GM10248 (cell line): ENCODE measurements at regions of chr5 and their contacts with region 1.

Region 1: GRCh38 chr5:81165493-81166119 is 67.5 kb upstream of the CKMT2 start:
- DNase-seq: peak; percentile 75
- CTCF ChIP-seq: peak; percentile 89

Region 2: DNA sequence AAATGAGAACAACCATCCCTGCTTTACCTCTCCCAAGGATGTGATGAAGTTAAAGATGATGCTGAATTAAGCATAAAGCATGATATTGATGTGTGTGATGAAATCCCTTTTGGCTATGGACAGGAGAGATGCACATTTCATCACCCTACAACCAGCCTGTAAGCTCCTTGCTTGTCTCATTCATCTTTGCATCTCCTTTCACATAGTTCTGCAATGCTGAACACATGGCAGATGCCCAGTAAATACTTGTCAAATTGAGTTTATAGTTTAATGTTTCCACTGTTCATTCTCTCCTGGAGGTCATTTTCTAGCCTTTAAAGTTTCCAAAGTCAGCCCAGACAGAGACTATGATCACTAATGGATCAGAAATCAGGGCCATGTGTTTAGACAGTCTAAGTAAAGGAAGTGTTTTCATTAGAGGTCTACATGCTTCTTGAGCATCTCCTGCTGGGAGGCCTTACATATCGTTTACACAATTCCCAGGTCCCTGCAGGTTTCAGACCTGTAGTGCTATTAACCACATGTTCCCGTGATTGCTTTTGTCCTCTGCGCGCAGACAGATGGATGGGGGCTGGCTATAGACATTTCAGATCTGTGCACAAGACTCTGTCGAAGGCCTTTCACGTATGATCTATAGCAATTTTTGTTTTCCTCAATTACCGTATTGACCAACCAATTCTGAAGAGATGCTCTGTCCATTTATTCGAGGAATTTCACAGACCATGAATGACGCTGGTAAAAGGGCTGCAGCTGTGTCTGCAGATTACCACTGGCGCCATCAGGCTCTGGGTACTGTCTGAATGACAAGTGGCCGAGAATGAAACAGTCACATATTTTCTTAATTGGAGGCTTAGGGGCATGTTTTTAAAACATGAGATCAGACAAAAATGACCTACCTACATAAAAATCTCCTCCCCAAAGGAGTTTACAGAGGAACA is 18.5 kb after region 1 on chr5:
- CTCF ChIA-PET with region 1: interaction called, 10 read pairs
- POLR2A ChIA-PET with region 1: no interaction called
- DNase-seq: no peak
- CTCF ChIP-seq: no peak

Region 3: DNA sequence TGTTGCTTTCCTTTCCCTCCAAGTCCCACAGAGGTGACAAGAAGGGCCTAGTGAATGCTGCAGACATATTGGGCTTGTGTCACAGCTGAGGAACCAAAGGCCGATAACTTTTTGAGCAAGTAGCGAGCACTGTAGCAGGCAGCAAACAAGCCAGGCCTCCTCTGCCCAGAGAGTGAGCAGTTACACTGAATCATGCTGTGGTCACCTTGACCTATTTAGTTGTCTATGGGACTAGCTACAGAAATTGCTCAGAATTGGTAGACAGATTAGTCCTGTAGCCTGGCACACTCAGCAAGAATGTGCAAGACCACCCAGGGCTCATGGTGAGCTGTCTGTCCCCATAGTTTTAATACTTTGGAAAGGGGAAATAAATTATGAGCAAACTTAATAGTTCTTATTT is 160.9 kb after region 1 on chr5:
- CTCF ChIA-PET with region 1: no interaction called
- POLR2A ChIA-PET with region 1: no interaction called
- DNase-seq: no peak
- CTCF ChIP-seq: no peak